Mammary epithelial cell (primary cell): ENCODE measurements at regions of chr19 and their contacts with region 1.

Region 1: GRCh38 chr19:9043544-9043943 is 33.3 kb upstream of the MUC16 start:
- DNase-seq: no peak
- H3K4me3 ChIP-seq: no peak overlapping the region
- H3K27ac ChIP-seq: no peak overlapping the region
- H3K4me1 ChIP-seq: no peaks in the 10 kb centered on the region
- H3K27me3 ChIP-seq: no peaks in the 10 kb centered on the region
- CTCF ChIP-seq: no peak

Region 2: DNA sequence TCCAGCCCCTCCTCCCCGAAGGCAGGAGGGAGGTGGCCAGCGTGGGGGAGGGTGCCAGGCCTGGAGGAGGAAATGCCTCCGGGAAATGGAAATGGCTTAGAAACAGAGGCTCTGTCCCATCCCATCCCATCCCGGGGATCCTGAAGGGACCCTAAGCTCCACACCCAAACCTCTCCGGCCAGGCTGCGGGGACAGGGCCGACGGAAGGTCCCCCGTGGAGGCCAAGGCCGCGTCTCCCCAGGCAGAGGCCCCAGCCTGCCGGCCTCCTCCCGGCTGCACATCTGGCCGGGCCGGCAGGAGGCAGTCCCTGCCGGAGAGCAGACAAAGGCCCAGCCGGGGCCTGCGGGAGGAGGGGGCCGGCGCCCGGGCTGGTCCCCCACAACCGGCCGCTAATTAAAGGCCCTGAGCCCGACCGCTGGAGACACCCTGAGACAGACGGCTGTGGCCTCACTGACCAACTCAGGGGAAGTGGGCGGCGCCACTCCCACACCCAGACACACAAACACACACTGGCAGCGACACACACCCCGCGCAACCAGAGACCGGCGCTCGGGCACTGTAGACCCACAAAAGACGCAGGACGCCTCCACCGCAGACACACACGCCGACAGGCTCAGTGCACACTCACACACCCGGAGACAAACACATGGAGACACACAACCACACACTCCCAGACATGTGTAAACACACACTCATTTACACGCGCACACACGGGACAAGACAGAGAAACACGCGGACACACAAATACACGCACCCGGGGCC is 434.1 kb before region 1 on chr19:
- CTCF ChIA-PET with region 1: no interaction called
- dilution Hi-C with region 1: loop called (anchors 5 kb)
- in situ Hi-C with region 1: no loop called
- intact Hi-C with region 1: no loop called
- DNase-seq: no peak
- H3K4me3 ChIP-seq: no peak overlapping the region
- H3K27ac ChIP-seq: no peak overlapping the region
- H3K4me1 ChIP-seq: no peaks in the 10 kb centered on the region
- H3K27me3 ChIP-seq: peaks cover 2% of the 10 kb centered on the region
- CTCF ChIP-seq: no peak

Region 3: GRCh38 chr19:8846819-8847218 is 196.7 kb before region 1 on chr19:
- CTCF ChIA-PET with region 1: no interaction called
- dilution Hi-C with region 1: no loop called
- in situ Hi-C with region 1: no loop called
- intact Hi-C with region 1: no loop called
- DNase-seq: no peak
- H3K4me3 ChIP-seq: no peak overlapping the region
- H3K27ac ChIP-seq: no peak overlapping the region
- H3K4me1 ChIP-seq: no peaks in the 10 kb centered on the region
- H3K27me3 ChIP-seq: no peaks in the 10 kb centered on the region
- CTCF ChIP-seq: no peak

Region 4: DNA sequence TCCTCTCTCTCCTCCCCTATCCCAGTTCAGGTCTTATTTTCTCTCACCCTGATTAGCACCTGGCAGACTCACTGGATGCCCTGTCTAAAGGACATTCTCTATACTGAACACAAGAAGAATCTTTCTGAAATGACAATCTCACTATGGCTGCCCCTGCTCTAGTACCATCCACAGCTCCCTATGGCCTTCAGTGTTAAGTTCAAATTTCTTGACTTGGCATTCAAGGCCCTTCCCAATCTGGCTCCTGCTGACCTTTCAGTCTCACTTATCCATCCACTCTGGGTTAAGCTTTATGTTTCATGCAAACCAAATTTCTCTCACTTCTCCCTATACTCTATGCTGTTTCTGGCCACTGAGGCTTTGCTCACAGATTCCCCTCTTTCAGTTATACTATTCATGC is 177.2 kb before region 1 on chr19:
- CTCF ChIA-PET with region 1: no interaction called
- dilution Hi-C with region 1: loop called (anchors 10 kb)
- in situ Hi-C with region 1: no loop called
- intact Hi-C with region 1: no loop called
- DNase-seq: no peak
- H3K4me3 ChIP-seq: no peak overlapping the region
- H3K27ac ChIP-seq: no peak overlapping the region
- H3K4me1 ChIP-seq: no peaks in the 10 kb centered on the region
- H3K27me3 ChIP-seq: no peaks in the 10 kb centered on the region
- CTCF ChIP-seq: no peak